Head of caudate nucleus (tissue), 42 donors: ENCODE measurements at regions of chr5 and their contacts with region 1.

Region 1: GRCh38 chr5:123875561-123876283 is 363.7 kb downstream of the CSNK1G3 start:
- DNase-seq: peak; percentile 19 to 85 (median 63)

Region 2: DNA sequence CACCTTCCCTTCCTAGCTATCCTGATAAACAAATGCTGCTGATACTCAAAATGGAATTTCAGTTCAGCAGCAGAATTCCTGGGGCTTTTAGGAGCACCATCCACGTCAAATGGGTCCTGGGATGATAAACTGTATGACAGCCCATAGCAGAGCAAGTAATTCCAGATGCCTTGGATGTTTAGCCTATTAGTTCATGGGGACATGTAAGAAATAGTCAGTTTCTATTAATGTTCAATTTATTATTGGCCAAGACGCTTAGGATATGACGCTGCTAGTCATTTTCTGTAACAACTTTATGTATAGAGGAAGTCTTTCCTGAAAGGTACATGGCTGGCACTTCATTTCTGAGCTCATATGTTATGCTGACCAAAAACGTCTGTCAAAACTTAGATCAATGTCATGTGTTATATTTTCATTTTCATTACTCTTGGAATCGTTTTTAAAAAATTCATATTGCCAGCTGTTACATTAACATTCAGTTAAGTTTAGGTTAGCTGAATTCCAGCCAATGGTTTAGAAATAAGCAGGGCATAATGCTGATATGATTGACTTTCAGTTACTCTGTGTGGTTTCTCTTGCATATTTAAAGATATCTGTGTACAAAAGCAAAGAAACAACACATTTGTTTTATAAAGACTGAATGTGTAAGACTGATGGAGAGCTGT is 119.9 kb before region 1 on chr5:
- intact Hi-C with region 1: loop called (anchors 5 kb)
- DNase-seq: no peak

Region 3: GRCh38 chr5:123807177-123807945 is 68.4 kb before region 1 on chr5:
- intact Hi-C with region 1: loop called (anchors 10 kb)
- DNase-seq: peak in 9 of 42 donors; percentile 14 to 49 (median 22)